ENCODE measurements at regions of chr1 and their contacts with region 1.

Region 1: GRCh38 chr1:167220537-167221125 is at the start of gene POU2F1:
- DNase-seq: peak; percentile 97
- H3K4me3 ChIP-seq: peak within 1 kb of the TSS; percentile 88 to 90 (median 90)
- H3K27ac ChIP-seq: peak within 1 kb of the TSS; percentile 91
- H3K4me1 ChIP-seq: peaks cover 12% of the 10 kb centered on the region
- H3K27me3 ChIP-seq: no peaks in the 10 kb centered on the region
- CTCF ChIP-seq: peak; percentile 25 to 79
- total RNA-seq, gene POU2F1: 10.2 to 14.4 TPM

Region 2: DNA sequence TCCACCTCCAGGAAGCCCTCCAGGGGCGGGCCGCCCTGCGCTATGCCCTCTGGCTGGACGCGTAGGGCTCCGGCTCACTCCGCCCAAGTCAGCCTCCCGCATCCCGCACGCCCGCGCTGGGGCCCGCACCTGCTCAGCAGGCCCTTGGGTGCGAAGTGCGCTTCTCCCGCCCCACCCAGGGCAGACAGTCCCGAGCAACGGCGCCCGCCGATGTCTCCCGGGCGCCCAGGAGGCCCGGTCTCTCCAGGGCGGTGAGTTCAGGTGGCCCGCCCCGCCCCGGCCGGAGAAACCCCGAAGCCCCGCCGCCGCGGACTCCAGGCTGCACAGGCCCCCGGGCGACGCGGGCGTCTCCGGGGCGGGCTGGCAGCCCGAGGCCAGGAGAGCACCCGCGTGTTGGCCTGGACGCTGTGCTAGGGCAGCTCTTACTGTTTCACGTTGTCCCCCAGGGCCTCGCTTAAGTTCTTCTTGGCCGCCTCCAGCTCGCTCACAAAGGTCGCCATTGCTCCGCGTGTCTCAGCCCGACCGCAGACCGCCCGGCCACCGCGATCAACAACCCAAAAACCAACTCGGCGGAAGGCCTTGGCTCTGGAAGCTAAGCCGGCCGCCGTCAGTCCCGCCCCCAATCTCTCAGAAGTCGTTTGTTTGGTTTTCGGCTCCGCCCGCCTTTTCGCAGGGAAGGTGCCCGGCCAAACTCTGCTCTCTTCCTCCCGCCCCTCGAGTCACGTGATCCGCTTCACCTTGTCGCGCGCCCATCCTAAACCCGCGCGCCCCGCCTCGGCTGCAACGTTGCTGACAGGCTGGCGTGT is 344.7 kb before region 1 on chr1 and contains the start of gene TADA1:
- CTCF ChIA-PET with region 1: no interaction called
- dilution Hi-C with region 1: no loop called
- in situ Hi-C with region 1: no loop called
- intact Hi-C with region 1: loop called (anchors 5 kb)
- DNase-seq: peak; percentile 98
- H3K4me3 ChIP-seq: peak within 1 kb of the TSS; percentile 76 to 87 (median 83)
- H3K27ac ChIP-seq: peak within 1 kb of the TSS; percentile 67
- H3K4me1 ChIP-seq: peaks cover 8% of the 10 kb centered on the region
- H3K27me3 ChIP-seq: no peaks in the 10 kb centered on the region
- CTCF ChIP-seq: no peak
- total RNA-seq, gene TADA1: 8.6 to 13.5 TPM

Region 3: DNA sequence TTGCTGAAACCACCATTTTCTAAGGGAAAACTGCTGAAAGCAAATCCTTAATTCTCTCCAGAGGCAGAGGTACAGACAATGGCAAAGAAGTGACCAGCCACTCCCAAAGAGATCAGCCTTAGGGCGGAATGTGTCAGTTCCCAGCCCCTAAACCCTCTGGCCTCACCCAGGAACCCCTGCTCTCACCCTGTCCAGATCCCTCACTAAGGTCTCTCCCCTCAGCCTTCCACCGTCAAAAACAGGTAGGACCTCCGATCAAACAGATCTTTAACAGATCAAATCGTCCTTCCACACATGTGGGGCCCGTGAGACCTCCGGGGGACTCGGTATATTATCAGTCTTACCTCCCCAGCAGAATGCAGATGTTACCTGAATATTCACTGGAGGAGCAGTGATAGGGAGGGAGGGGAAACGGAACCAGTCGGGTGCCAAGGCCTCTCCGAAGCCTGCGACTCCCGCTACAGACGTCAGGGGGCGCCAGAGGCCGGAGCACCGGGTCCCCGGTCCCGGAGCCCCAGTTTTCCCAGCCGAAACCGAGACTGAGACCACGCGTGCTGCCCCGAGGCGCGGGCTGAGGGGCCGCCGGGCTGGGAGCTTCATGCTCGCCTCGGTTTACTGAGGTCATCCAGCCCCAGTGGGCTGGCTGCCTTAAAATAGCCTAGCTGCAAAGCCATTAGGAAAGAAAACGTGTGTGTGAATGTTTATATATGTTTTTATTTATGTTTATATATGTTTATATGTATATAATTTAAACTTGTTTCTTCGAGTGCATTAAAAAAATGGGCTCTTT is 154.1 kb before region 1 on chr1:
- CTCF ChIA-PET with region 1: no interaction called
- dilution Hi-C with region 1: no loop called
- in situ Hi-C with region 1: loop called in 1 of 2 experiments (anchors 10 kb)
- intact Hi-C with region 1: loop called (anchors 1 kb)
- DNase-seq: peak; percentile 51
- H3K4me3 ChIP-seq: peak overlapping the region; percentile 28 to 40 (median 35)
- H3K27ac ChIP-seq: no peak overlapping the region
- H3K4me1 ChIP-seq: no peaks in the 10 kb centered on the region
- H3K27me3 ChIP-seq: no peaks in the 10 kb centered on the region
- CTCF ChIP-seq: peak; percentile 61 to 96

Region 4: DNA sequence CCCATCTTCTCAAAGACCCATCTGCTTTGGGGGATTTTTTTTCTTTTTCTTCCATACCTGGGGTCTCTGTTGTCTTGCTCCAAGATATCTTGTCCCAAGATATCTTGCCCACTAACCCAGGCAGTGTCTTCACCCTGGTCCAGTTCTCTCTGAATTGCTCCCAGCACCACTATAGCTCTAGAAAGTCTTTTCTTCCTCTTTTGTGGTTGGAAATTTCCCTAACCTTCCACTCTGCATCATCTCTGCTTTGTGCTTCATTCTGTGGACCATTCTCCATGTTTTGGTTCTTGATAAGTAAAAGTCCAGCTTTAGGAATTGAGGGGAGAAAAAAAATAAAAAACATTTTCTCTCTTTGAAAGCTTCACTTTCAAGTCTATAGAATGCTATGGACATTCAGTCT is 105.9 kb before region 1 on chr1:
- CTCF ChIA-PET with region 1: no interaction called
- dilution Hi-C with region 1: no loop called
- in situ Hi-C with region 1: no loop called
- intact Hi-C with region 1: no loop called
- DNase-seq: no peak
- H3K4me3 ChIP-seq: no peak overlapping the region
- H3K27ac ChIP-seq: no peak overlapping the region
- H3K4me1 ChIP-seq: peaks cover 11% of the 10 kb centered on the region
- H3K27me3 ChIP-seq: no peaks in the 10 kb centered on the region
- CTCF ChIP-seq: no peak

Region 5: GRCh38 chr1:167145965-167146364 is 74.7 kb before region 1 on chr1:
- CTCF ChIA-PET with region 1: interaction called, 18 read pairs
- dilution Hi-C with region 1: no loop called
- in situ Hi-C with region 1: no loop called
- intact Hi-C with region 1: no loop called
- DNase-seq: peak; percentile 53
- H3K4me3 ChIP-seq: no peak overlapping the region
- H3K27ac ChIP-seq: no peak overlapping the region
- H3K4me1 ChIP-seq: no peaks in the 10 kb centered on the region
- H3K27me3 ChIP-seq: no peaks in the 10 kb centered on the region
- CTCF ChIP-seq: no peak

Region 6: GRCh38 chr1:167249702-167250101 is 29.1 kb after region 1 on chr1:
- CTCF ChIA-PET with region 1: no interaction called
- dilution Hi-C with region 1: no loop called
- in situ Hi-C with region 1: no loop called
- intact Hi-C with region 1: no loop called
- DNase-seq: no peak
- H3K4me3 ChIP-seq: no peak overlapping the region
- H3K27ac ChIP-seq: no peak overlapping the region
- H3K4me1 ChIP-seq: no peaks in the 10 kb centered on the region
- H3K27me3 ChIP-seq: no peaks in the 10 kb centered on the region
- CTCF ChIP-seq: no peak

Region 7: GRCh38 chr1:167263819-167264464 is 43.3 kb after region 1 on chr1:
- CTCF ChIA-PET with region 1: interaction called, 14 read pairs
- dilution Hi-C with region 1: no loop called
- in situ Hi-C with region 1: no loop called
- intact Hi-C with region 1: no loop called
- DNase-seq: no peak
- H3K4me3 ChIP-seq: no peak overlapping the region
- H3K27ac ChIP-seq: no peak overlapping the region
- H3K4me1 ChIP-seq: no peaks in the 10 kb centered on the region
- H3K27me3 ChIP-seq: no peaks in the 10 kb centered on the region
- CTCF ChIP-seq: no peak

Region 8: GRCh38 chr1:167533851-167534300 is 313.2 kb after region 1 on chr1:
- CTCF ChIA-PET with region 1: no interaction called
- dilution Hi-C with region 1: no loop called
- in situ Hi-C with region 1: no loop called
- intact Hi-C with region 1: loop called (anchors 2 kb)
- DNase-seq: peak; percentile 68
- H3K4me3 ChIP-seq: no peak overlapping the region
- H3K27ac ChIP-seq: no peak overlapping the region
- H3K4me1 ChIP-seq: peaks cover 21% of the 10 kb centered on the region
- H3K27me3 ChIP-seq: no peaks in the 10 kb centered on the region
- CTCF ChIP-seq: peak; percentile 87 to 90